GM12878 (cell line): ENCODE measurements at regions of chr10 and their contacts with region 1.

Region 1: GRCh38 chr10:121974535-121975294 is at the start of gene NSMCE4A:
- DNase-seq: peak; percentile 5
- ATAC-seq: peak; percentile 93
- H3K4me3 ChIP-seq: peak within 1 kb of the TSS; percentile 95
- H3K27ac ChIP-seq: peak within 1 kb of the TSS; percentile 89
- H3K4me1 ChIP-seq: no peaks in the 10 kb centered on the region
- H3K27me3 ChIP-seq: no peaks in the 10 kb centered on the region
- CTCF ChIP-seq: peak in 2 of 3 experiments; percentile 80 to 84; a peak in 5 of 6 replicates
- EP300 ChIP-seq: no peak
- POLR2A ChIP-seq: peak; percentile 87
- RAD21 ChIP-seq: no peak
- polyA plus RNA-seq, gene NSMCE4A: 14.2 to 33.3 TPM

Region 2: DNA sequence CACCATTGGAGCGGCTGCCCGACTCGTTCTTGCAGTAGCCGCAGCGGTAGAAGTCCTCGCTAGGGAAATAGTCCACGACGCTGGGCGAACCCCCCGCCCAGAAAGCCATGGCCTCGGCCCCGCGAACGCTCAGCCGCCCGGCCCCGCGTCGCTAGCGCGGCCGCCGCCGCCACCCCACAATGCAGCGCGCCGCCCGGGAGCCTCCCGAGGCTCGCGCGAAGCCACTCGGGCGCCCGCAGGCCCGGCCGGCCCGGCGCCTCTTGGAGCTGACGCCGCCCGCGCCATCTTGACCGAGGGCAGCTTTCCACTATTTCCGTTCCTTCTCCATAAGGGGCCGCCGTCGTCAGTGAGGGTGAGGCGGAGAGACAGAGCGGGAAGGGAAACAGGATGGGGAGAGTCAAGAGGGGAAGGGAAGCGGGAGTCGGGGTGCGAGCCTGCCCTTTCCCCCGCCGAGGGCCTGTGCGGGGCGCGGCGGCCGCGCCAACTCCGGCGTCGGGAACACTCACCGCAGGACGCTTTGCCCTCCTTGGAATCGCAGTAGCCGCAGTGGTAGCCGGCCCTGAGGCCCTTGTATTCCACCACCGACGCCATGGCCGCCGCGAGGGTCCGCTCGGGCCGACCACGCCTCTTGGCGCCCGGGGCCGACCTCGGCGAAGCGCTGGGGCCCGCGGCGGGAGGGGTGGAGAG is 46.7 kb before region 1 on chr10 and contains the start of gene ATE1:
- CTCF ChIA-PET with region 1: interaction called, 3 read pairs
- POLR2A ChIA-PET with region 1: interaction called, 3 read pairs
- RAD21 ChIA-PET with region 1: no interaction called
- SMC1A ChIA-PET with region 1: interaction called, 3 read pairs
- in situ Hi-C with region 1: no loop called
- intact Hi-C with region 1: loop called (anchors 2 kb)
- DNase-seq: no peak
- ATAC-seq: peak; percentile 96
- H3K4me3 ChIP-seq: peak within 1 kb of the TSS; percentile 77
- H3K27ac ChIP-seq: peak within 1 kb of the TSS; percentile 95
- H3K4me1 ChIP-seq: no peaks in the 10 kb centered on the region
- H3K27me3 ChIP-seq: no peaks in the 10 kb centered on the region
- CTCF ChIP-seq: no peak
- EP300 ChIP-seq: no peak
- POLR2A ChIP-seq: peak; percentile 86
- RAD21 ChIP-seq: no peak
- polyA plus RNA-seq, gene ATE1: 4.3 to 5.3 TPM

Region 3: DNA sequence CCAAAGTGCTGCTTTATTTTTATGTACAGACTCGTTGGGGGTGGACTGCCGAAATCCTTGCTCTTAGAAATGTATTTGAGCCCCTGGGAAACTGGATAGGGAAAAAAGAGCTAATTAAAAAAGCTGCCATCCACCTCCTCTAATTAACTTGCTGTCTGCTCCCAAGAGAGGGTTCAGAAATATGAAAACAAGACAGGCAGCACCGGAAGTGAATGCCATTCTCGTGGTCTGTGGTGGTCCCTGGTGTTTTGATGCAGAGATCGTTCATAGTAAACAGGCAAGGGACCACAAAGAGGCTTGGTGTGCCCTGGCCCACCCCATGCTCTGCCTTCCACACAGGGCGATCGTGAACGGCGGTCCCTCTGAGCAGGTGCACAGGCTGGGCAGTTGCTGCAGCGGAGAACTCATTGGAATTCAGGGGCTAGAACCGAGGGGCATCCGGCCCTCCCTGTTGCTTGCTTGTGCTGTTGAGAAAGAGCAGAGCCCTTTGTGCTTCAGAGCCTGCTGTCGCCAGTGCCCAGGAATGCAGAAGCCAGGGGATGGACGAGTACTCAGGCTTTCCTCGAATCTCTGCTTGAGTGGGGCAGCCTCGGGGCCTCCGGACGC is 217.3 kb after region 1 on chr10:
- CTCF ChIA-PET with region 1: no interaction called
- POLR2A ChIA-PET with region 1: no interaction called
- RAD21 ChIA-PET with region 1: no interaction called
- SMC1A ChIA-PET with region 1: no interaction called
- in situ Hi-C with region 1: no loop called
- intact Hi-C with region 1: no loop called
- DNase-seq: no peak
- ATAC-seq: no peak
- H3K4me3 ChIP-seq: no peak overlapping the region
- H3K27ac ChIP-seq: no peak overlapping the region
- H3K4me1 ChIP-seq: no peaks in the 10 kb centered on the region
- H3K27me3 ChIP-seq: no peaks in the 10 kb centered on the region; a peak in 2 of 4 replicates
- CTCF ChIP-seq: no peak
- EP300 ChIP-seq: no peak
- POLR2A ChIP-seq: no peak
- RAD21 ChIP-seq: no peak